Activated CD8-positive, alpha-beta T cell treated with anti-CD3 and anti-CD28 coated beads for 36 hours (primary cell): ENCODE measurements at regions of chr2 and their contacts with region 1.

Region 1: GRCh38 chr2:172484253-172484652 is 56.9 kb downstream of the ITGA6 start:
- DNase-seq: no peak
- ATAC-seq: peak; percentile 31
- H3K4me3 Mint-ChIP-seq: no peak overlapping the region
- H3K27ac Mint-ChIP-seq: no peak overlapping the region
- H3K4me1 Mint-ChIP-seq: peaks cover 52% of the 10 kb centered on the region
- H3K27me3 Mint-ChIP-seq: no peaks in the 10 kb centered on the region
- CTCF ChIP-seq: peak; percentile 42

Region 2: GRCh38 chr2:172172513-172173173 is 311.6 kb before region 1 on chr2:
- CTCF ChIA-PET with region 1: interaction called, 10 read pairs
- POLR2A ChIA-PET with region 1: no interaction called
- intact Hi-C with region 1: no loop called
- DNase-seq: peak; percentile 70
- ATAC-seq: peak; percentile 98
- H3K4me3 Mint-ChIP-seq: peak overlapping the region; percentile 47
- H3K27ac Mint-ChIP-seq: no peak overlapping the region
- H3K4me1 Mint-ChIP-seq: peaks cover 2% of the 10 kb centered on the region
- H3K27me3 Mint-ChIP-seq: peaks cover 6% of the 10 kb centered on the region
- CTCF ChIP-seq: peak; percentile 80

Region 3: GRCh38 chr2:172408143-172408766 is 76.0 kb before region 1 on chr2:
- CTCF ChIA-PET with region 1: no interaction called
- POLR2A ChIA-PET with region 1: no interaction called
- intact Hi-C with region 1: no loop called
- DNase-seq: no peak
- ATAC-seq: no peak
- H3K4me3 Mint-ChIP-seq: no peak overlapping the region
- H3K27ac Mint-ChIP-seq: no peak overlapping the region
- H3K4me1 Mint-ChIP-seq: peaks cover 3% of the 10 kb centered on the region
- H3K27me3 Mint-ChIP-seq: no peaks in the 10 kb centered on the region
- CTCF ChIP-seq: no peak

Region 4: GRCh38 chr2:172472446-172473033 is 11.7 kb before region 1 on chr2:
- CTCF ChIA-PET with region 1: interaction called, 36 read pairs
- POLR2A ChIA-PET with region 1: interaction called, 3 read pairs
- intact Hi-C with region 1: no loop called
- DNase-seq: peak; percentile 54
- ATAC-seq: peak; percentile 76
- H3K4me3 Mint-ChIP-seq: peak overlapping the region; percentile 46
- H3K27ac Mint-ChIP-seq: peak overlapping the region; percentile 59
- H3K4me1 Mint-ChIP-seq: peaks cover 25% of the 10 kb centered on the region
- H3K27me3 Mint-ChIP-seq: no peaks in the 10 kb centered on the region
- CTCF ChIP-seq: no peak

Region 5: GRCh38 chr2:172496160-172496608 is 11.9 kb after region 1 on chr2:
- CTCF ChIA-PET with region 1: interaction called, 19 read pairs
- POLR2A ChIA-PET with region 1: no interaction called
- intact Hi-C with region 1: no loop called
- DNase-seq: peak; percentile 18
- ATAC-seq: peak; percentile 72
- H3K4me3 Mint-ChIP-seq: peak overlapping the region; percentile 24
- H3K27ac Mint-ChIP-seq: peak overlapping the region; percentile 95
- H3K4me1 Mint-ChIP-seq: peaks cover 65% of the 10 kb centered on the region
- H3K27me3 Mint-ChIP-seq: no peaks in the 10 kb centered on the region
- CTCF ChIP-seq: no peak

Region 6: GRCh38 chr2:172710584-172711024 is 226.4 kb after region 1 on chr2:
- CTCF ChIA-PET with region 1: interaction called, 10 read pairs
- POLR2A ChIA-PET with region 1: no interaction called
- intact Hi-C with region 1: no loop called
- DNase-seq: peak; percentile 58
- ATAC-seq: no peak
- H3K4me3 Mint-ChIP-seq: no peak overlapping the region
- H3K27ac Mint-ChIP-seq: no peak overlapping the region
- H3K4me1 Mint-ChIP-seq: no peaks in the 10 kb centered on the region
- H3K27me3 Mint-ChIP-seq: peaks cover 2% of the 10 kb centered on the region
- CTCF ChIP-seq: peak; percentile 87